ENCODE measurements at regions of chr12 and their contacts with region 1.

Region 1: DNA sequence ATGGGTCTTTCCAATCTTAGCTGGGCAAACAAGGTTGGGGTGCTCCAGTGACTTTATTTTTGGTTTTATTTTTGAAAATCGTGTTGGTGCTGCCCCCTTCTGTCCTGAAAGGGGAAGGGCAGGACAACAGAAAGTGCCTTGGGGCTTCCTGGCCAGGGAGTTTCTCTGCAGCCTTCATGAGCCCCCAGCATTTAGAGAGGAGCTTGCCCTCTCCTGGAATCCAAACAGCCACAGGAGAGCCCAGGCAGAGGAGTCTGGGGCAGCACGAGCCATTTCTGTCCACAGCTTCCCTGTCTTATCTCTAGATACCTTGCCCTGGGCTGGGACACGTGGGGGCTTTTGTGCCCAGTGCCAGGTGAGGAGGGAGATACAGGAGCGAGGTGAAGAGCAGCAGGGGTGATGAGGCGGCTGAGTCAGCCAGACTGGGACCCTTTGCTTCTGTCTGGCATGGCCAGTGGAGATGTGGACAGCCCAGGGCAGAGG is 4.4 kb upstream of the C1RL start:
- DNase-seq: peak in 1 of 7 donors; percentile 41
- H3K4me3 ChIP-seq: no peak overlapping the region
- H3K27ac ChIP-seq: peak overlapping the region in 1 of 5 donors; percentile 4
- H3K4me1 ChIP-seq: peaks cover 0 to 13% of the 10 kb centered on the region in 2 donors
- H3K27me3 ChIP-seq: no peaks in the 10 kb centered on the region
- CTCF ChIP-seq: peak; percentile 73 to 88 (median 78)
- POLR2A ChIP-seq: no peak

Region 2: GRCh38 chr12:6582196-6582595 is 531.2 kb before region 1 on chr12:
- intact Hi-C with region 1: no loop called
- DNase-seq: no peak
- H3K4me3 ChIP-seq: no peak overlapping the region
- H3K27ac ChIP-seq: no peak overlapping the region
- H3K4me1 ChIP-seq: no peaks in the 10 kb centered on the region
- H3K27me3 ChIP-seq: no peaks in the 10 kb centered on the region
- CTCF ChIP-seq: no peak
- POLR2A ChIP-seq: no peak

Region 3: DNA sequence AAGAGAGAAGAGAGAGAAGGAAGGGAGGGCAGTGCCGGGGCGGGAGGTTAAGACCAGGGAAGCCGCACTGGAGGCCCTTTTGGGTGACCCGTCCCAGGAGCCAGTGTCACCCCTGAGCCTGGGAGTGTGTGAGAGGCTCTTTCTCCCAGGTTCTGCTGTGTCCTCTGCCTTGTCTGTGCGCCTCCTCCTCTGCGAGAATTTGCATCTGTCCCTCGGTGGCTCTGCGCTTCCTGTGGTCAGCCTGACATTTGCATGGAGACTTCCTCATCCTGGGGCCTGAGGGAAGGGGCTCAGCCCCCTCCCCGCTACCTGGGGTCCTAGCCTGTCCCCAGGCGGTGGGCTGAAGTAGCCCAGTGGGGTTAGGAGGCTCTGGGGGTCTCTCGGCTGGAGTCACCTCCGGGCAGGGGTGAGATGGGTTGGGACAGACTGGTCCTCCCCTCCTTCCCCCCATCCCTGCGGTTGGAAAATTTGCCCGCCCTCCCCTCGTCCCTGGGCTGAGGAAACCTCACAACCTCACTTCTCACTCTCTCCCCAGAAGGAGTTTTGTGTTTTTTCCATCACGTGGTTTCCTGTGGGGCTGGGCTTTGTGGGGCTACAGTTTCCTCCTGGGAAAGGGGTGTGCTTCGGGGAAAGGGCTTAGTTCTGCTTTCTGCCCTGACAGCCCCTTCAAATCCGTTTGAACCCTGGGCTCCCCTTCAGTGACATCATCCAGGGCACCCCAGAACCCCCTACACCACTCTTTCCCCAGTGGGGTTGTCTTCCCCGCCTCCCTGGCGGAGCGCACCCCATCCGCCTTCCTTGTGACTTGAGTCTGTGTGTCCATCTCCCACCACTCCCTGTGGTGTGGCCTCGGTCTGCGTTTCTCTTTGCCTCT is 159.8 kb before region 1 on chr12:
- intact Hi-C with region 1: loop called in 1 of 2 experiments (anchors 10 kb)
- DNase-seq: peak in 5 of 7 donors; percentile 43 to 66 (median 57)
- H3K4me3 ChIP-seq: peak overlapping the region in 1 of 4 donors; percentile 33
- H3K27ac ChIP-seq: peak overlapping the region; percentile 4 to 83 (median 14)
- H3K4me1 ChIP-seq: peaks cover 10 to 34% of the 10 kb centered on the region in 2 donors
- H3K27me3 ChIP-seq: no peaks in the 10 kb centered on the region
- CTCF ChIP-seq: no peak
- POLR2A ChIP-seq: peak; percentile 28 to 33

Region 4: DNA sequence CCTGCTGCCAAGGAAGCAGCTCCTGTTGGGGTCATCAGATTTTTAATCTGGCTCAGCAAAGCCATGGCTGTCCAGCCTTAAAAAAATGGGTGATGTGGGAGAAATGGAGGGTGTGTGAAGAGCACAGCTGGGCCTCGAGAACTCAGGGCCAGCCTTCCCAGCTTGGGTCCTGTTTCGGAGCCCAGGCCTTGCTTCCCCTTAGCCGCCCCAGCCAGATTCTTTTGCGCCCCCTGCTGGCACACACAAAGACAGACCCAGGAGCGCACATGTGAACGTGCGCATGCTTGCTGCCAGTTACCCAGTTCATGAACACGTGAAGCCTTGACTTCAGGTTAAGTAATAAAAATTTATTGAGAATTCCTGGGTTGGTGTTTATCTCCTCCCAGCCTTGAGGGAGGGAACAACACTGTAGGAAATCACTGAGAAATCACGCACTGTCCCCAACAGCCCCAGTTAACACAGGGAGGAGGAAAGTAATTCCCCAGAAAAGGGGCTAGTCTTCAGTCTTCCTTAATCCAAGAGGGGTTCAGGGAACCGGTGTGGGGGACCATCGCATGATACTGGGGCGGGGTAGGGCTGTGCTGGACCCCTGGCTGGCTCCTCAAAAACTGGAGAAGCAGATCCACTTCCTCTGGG is 148.3 kb before region 1 on chr12:
- intact Hi-C with region 1: loop called in 1 of 2 experiments (anchors 10 kb)
- DNase-seq: peak; percentile 93 to 95 (median 94)
- H3K4me3 ChIP-seq: no peak overlapping the region
- H3K27ac ChIP-seq: peak overlapping the region; percentile 70 to 93 (median 86)
- H3K4me1 ChIP-seq: peaks cover 39 to 42% of the 10 kb centered on the region in 2 donors
- H3K27me3 ChIP-seq: no peaks in the 10 kb centered on the region
- CTCF ChIP-seq: peak; percentile 91 to 97 (median 96)
- POLR2A ChIP-seq: peak in 1 of 2 donors; percentile 71

Region 5: GRCh38 chr12:7079826-7080125 is 33.7 kb before region 1 on chr12:
- intact Hi-C with region 1: no loop called
- DNase-seq: no peak
- H3K4me3 ChIP-seq: no peak overlapping the region
- H3K27ac ChIP-seq: peak overlapping the region in 4 of 5 donors; percentile 45 to 87 (median 67)
- H3K4me1 ChIP-seq: peaks cover 0 to 9% of the 10 kb centered on the region in 2 donors
- H3K27me3 ChIP-seq: no peaks in the 10 kb centered on the region
- CTCF ChIP-seq: no peak
- POLR2A ChIP-seq: no peak

Region 6: DNA sequence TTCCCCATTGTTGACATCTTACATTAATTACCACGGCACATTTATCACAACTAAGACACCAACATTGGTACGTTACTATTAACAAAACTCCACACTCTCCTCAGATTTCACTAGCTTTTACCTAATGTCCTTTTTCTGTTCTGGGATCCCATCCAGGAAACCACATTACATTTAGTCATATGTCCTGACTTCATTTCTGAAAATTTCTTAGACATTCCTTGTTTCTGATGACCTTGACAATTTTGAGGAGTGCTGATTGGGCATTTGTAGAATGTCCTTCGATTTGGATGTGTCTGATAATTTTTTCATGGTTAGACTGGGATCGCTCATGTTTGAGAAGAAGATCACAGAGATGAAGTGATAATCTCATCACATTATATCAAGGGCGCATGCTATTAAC is 155.8 kb after region 1 on chr12:
- intact Hi-C with region 1: no loop called
- DNase-seq: no peak
- H3K4me3 ChIP-seq: no peak overlapping the region
- H3K27ac ChIP-seq: no peak overlapping the region
- H3K4me1 ChIP-seq: no peaks in the 10 kb centered on the region
- H3K27me3 ChIP-seq: no peaks in the 10 kb centered on the region
- CTCF ChIP-seq: no peak
- POLR2A ChIP-seq: no peak

Measured in adrenal gland (tissue), 19 donors.